Heart left ventricle (tissue), 16 donors: ENCODE measurements at regions of chr1 and their contacts with region 1.

Region 1: GRCh38 chr1:42784946-42785693 is at the start of gene TMEM269:
- DNase-seq: peak in 3 of 5 donors; percentile 40 to 66 (median 51)
- ATAC-seq: peak; percentile 17 to 47 (median 42)
- H3K4me3 ChIP-seq: peak within 1 kb of the TSS in 11 of 12 donors; percentile 19 to 59 (median 50)
- H3K27ac ChIP-seq: no peak within 1 kb of the TSS
- H3K4me1 ChIP-seq: peaks cover 0 to 19% (median 8%) of the 10 kb centered on the region in 12 donors
- H3K27me3 ChIP-seq: no peaks in the 10 kb centered on the region
- CTCF ChIP-seq: no peak
- POLR2A ChIP-seq: no peak
- total RNA-seq, gene TMEM269: 0.06 to 0.19 (median 0.07) TPM in 3 of 9 donors, not detected in the others

Region 2: DNA sequence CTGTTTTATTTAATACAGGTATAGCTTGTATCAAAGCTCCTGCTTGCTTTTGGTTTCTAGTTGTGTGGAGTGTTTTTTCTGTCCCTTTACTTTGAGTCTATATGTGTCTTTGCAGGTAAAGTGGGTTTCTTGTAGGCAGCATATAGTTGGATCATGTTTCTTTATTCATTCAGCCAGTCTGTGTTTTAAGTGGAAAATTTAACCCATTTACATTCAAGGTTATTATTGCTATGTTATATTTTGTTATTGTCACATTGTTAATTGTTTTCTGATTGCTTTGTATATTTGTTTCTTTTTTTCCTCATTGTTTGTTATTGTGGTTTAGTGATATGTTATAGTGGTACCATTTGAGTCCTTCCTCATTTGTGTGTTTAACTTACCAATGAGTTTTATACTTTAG is 71.8 kb before region 1 on chr1:
- intact Hi-C with region 1: no loop called
- DNase-seq: no peak
- ATAC-seq: no peak
- H3K4me3 ChIP-seq: no peak overlapping the region
- H3K27ac ChIP-seq: no peak overlapping the region
- H3K4me1 ChIP-seq: no peaks in the 10 kb centered on the region
- H3K27me3 ChIP-seq: no peaks in the 10 kb centered on the region
- CTCF ChIP-seq: no peak
- POLR2A ChIP-seq: no peak

Region 3: DNA sequence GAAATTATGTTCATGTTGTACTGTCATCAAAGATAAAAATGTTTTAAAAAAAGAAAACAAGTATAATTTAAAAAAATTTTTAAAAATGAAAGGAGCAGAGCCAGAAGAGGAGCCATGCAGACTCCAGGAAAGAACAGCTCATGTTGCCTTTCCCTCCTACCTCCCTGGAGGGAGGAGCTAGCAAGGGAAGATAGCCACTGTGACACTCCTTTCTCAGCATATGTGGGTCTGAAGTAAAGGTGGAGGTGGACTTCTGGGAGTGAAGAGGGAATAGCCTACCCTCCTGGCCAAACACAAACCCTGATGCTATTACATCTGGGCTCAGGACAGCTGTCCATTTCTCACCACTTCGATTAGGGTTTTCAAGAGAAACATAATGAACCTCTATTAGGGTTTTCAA is 119.3 kb after region 1 on chr1:
- intact Hi-C with region 1: loop called in 1 of 10 experiments (anchors 10 kb)
- DNase-seq: no peak
- ATAC-seq: no peak
- H3K4me3 ChIP-seq: no peak overlapping the region
- H3K27ac ChIP-seq: no peak overlapping the region
- H3K4me1 ChIP-seq: no peaks in the 10 kb centered on the region
- H3K27me3 ChIP-seq: no peaks in the 10 kb centered on the region
- CTCF ChIP-seq: no peak
- POLR2A ChIP-seq: no peak